Heart right ventricle (tissue), 16 donors: ENCODE measurements at regions of chr1 and their contacts with region 1.

Region 1: DNA sequence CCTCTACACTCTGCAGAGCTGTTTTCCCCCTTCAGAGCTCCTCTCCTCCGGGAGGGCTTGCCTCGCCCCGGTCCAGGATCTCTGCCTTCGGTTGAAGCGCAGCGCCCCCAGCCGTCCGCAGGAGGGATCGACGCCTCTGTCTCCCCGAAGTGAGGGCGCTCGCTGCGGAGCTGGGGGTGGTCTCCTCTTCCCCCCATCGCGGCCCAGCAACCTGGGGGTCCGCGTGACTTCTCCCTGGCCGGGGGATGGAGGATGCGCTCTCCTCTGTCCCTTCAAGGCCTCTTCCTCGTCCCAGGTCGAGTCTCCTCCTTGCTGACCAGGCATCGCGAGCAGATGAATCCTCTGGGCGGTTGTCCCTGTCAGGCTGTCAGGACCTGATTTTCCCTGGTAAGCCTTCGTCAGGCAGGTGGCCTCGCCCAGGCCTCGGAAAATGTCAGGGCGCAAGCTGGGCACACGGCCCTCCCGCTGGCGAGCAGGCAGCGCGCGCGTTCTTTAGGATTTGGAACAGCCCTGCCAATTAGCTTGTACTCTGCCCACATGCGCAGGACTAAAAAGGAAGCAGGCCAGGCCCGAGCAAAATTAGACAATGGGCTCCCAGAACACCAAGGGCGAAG is 90.5 kb downstream of the EDEM3 start:
- DNase-seq: peak; percentile 75 to 86
- ATAC-seq: peak; percentile 92 to 96 (median 95)
- H3K4me3 ChIP-seq: peak overlapping the region in 9 of 10 donors; percentile 23 to 59 (median 45)
- H3K27ac ChIP-seq: peak overlapping the region in 4 of 10 donors; percentile 26 to 54 (median 38)
- H3K4me1 ChIP-seq: peaks cover 0 to 14% (median 13%) of the 10 kb centered on the region in 9 donors
- H3K27me3 ChIP-seq: no peaks in the 10 kb centered on the region
- CTCF ChIP-seq: peak; percentile 85 to 99 (median 95)

Region 2: GRCh38 chr1:184082541-184083415 is 581.4 kb before region 1 on chr1:
- intact Hi-C with region 1: loop called in 8 of 10 experiments (anchors 5 to 10 kb)
- DNase-seq: no peak
- ATAC-seq: no peak
- H3K4me3 ChIP-seq: no peak overlapping the region
- H3K27ac ChIP-seq: no peak overlapping the region
- H3K4me1 ChIP-seq: peaks cover 0 to 16% (median 5%) of the 10 kb centered on the region in 9 donors
- H3K27me3 ChIP-seq: no peaks in the 10 kb centered on the region
- CTCF ChIP-seq: no peak

Region 3: GRCh38 chr1:184379111-184379946 is 284.8 kb before region 1 on chr1:
- intact Hi-C with region 1: loop called in 5 of 10 experiments (anchors 5 to 10 kb)
- DNase-seq: no peak
- ATAC-seq: peak in 5 of 8 donors; percentile 60 to 67 (median 65)
- H3K4me3 ChIP-seq: no peak overlapping the region
- H3K27ac ChIP-seq: no peak overlapping the region
- H3K4me1 ChIP-seq: peaks cover 0 to 8% (median 0%) of the 10 kb centered on the region in 9 donors
- H3K27me3 ChIP-seq: no peaks in the 10 kb centered on the region
- CTCF ChIP-seq: peak in 7 of 9 donors; percentile 7 to 50 (median 42)

Region 4: DNA sequence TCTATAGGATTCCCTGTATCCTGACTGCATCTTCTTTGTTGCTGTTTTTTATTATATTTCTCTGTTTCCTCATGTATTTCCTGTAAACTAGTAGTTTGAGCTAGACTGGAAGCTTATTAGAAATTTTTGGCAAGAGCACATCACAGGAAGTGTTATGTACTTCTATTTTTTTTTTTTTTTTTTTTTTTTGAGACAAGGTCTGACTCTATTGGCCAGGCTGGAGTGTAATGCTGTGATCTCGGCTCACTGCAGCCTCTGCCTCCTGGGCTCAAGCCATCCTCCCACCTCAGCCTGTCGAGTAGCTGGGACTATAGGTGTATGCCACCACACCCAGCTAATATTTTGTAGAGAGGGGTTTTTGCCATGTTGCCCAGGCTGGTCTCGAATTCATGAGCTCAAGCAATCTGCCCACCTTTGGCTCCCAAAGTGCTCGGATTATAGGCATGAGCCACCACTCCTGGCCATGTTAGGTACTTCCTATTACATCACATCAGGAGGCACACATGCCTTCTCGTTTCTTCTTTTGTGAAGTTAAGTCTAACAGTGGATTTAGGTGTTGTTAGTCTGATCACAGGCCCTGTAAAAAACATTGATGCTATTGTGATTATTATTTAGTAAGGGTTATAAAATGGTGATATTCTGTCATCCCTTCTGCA is 264.8 kb before region 1 on chr1:
- intact Hi-C with region 1: no loop called
- DNase-seq: no peak
- ATAC-seq: peak in 7 of 8 donors; percentile 39 to 72 (median 64)
- H3K4me3 ChIP-seq: no peak overlapping the region
- H3K27ac ChIP-seq: peak overlapping the region in 4 of 10 donors; percentile 0 to 39 (median 6)
- H3K4me1 ChIP-seq: peaks cover 0 to 77% (median 46%) of the 10 kb centered on the region in 9 donors
- H3K27me3 ChIP-seq: no peaks in the 10 kb centered on the region
- CTCF ChIP-seq: no peak

Region 5: DNA sequence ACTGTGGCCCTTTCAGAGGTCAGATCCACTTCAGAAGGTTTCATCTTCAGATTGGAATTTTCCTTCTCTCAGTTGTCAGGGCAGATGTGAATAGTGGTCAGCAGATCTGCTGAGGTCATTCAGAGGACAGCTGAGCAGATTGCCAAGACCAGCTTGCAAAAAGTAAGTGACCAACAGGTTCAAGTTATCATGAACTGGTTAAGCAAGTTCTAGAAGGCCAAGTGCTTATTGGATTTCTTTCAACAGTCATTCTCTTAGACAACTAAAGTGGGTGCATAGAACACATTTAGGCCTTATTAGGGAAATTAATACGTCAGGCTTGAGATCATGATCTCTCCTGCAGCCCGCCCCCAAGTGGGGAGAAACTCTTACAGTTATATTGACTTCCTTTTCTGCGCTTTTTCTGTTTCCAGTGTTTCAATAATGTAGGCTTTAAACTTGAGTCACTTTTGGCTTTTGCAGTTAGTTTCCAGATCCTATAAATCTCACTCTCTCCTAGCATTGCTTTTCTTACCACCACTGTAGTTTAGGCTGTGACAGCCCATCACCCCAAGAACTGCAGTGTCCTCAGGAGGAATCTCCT is 181.0 kb before region 1 on chr1:
- intact Hi-C with region 1: loop called in 1 of 10 experiments (anchors 10 kb)
- DNase-seq: peak in 1 of 2 donors; percentile 39
- ATAC-seq: peak in 7 of 8 donors; percentile 13 to 60 (median 39)
- H3K4me3 ChIP-seq: no peak overlapping the region
- H3K27ac ChIP-seq: peak overlapping the region; percentile 41 to 88 (median 64)
- H3K4me1 ChIP-seq: peaks cover 29 to 86% (median 71%) of the 10 kb centered on the region in 9 donors
- H3K27me3 ChIP-seq: no peaks in the 10 kb centered on the region
- CTCF ChIP-seq: peak in 5 of 9 donors; percentile 15 to 45 (median 30)

Region 6: DNA sequence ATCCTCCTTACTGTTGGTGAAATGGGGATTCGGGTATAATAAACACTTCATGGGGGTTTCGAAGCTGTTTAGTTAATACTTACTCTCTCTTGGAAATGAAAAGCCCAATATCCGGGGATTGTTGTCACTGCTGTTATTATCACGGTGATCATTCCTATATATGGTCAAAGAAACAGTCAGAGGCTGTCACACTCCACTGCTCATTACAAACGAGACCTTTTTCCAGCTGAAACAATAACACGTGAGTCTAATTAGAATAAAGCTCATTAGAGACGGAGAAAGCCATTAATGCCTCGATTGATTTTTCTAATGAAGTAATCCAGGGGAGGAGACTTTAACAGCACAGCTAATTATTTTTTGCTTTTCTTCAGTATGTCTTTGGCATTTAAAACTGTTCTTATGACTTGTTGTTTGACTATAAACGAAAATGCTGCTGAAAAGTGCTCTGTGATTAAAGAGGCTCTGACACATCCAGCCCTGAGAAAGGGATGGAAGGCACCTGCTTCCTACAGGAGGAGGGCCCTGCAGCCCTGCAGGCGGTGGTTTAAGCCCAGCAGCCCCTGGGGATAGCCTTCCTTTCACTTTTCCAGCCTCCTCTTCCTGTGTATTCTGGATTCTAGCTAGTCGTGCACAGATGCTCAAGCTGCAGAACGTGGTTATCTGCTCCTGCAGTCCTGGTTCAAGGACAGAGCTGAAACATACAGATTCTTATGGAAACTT is 53.1 kb before region 1 on chr1:
- intact Hi-C with region 1: loop called in 1 of 10 experiments (anchors 10 kb)
- DNase-seq: no peak
- ATAC-seq: peak in 7 of 8 donors; percentile 51 to 81 (median 62)
- H3K4me3 ChIP-seq: peak overlapping the region in 1 of 10 donors; percentile 26
- H3K27ac ChIP-seq: peak overlapping the region in 8 of 10 donors; percentile 3 to 66 (median 36)
- H3K4me1 ChIP-seq: peaks cover 8 to 54% (median 35%) of the 10 kb centered on the region in 9 donors
- H3K27me3 ChIP-seq: no peaks in the 10 kb centered on the region
- CTCF ChIP-seq: no peak